ENCODE measurements at regions of chr11 and their contacts with region 1.

Region 1: GRCh38 chr11:43852057-43852636 is 28.5 kb upstream of the ALKBH3 start:
- DNase-seq: no peak
- H3K4me3 ChIP-seq: no peak overlapping the region
- H3K27ac ChIP-seq: no peak overlapping the region
- H3K4me1 ChIP-seq: no peaks in the 10 kb centered on the region
- H3K27me3 ChIP-seq: no peaks in the 10 kb centered on the region
- CTCF ChIP-seq: peak; percentile 45 to 77 (median 69)
- POLR2A ChIP-seq: no peak

Region 2: DNA sequence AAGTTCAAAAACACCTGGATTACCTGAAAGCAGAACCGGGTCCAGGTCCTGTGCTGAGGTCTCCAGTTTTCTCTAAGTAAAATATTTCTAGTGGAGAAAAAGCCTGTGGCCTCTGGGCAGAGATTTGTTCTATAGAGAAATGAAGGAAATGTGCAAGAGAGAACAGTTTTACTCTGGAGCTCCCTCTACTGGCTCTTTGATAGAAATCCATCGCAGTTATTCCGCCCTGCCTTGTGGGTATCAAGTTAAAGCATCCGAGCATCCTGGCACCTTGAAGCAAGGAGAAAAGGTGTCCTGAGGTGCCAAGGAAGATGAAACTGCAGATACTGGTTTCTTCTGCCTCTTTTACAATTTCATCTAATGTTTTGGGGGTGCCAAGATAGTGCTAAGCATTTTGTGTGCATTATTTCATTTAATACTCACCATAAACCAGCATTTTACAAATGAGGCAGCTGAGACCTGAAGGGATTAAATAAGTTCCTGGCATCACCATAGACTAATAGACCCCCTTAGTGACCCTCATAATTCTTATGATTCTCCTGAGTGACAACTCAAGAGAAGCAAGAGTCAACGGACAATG is 284.7 kb before region 1 on chr11:
- intact Hi-C with region 1: loop called (anchors 10 kb)
- DNase-seq: no peak
- H3K4me3 ChIP-seq: no peak overlapping the region
- H3K27ac ChIP-seq: no peak overlapping the region
- H3K4me1 ChIP-seq: no peaks in the 10 kb centered on the region
- H3K27me3 ChIP-seq: peaks cover 0 to 84% (median 3%) of the 10 kb centered on the region in 7 donors
- CTCF ChIP-seq: peak in 9 of 11 experiments; percentile 24 to 71 (median 60)
- POLR2A ChIP-seq: no peak

Region 3: GRCh38 chr11:43784866-43785265 is 67.3 kb before region 1 on chr11:
- intact Hi-C with region 1: no loop called
- DNase-seq: no peak
- H3K4me3 ChIP-seq: no peak overlapping the region
- H3K27ac ChIP-seq: no peak overlapping the region
- H3K4me1 ChIP-seq: peaks cover 0 to 24% (median 11%) of the 10 kb centered on the region in 6 donors
- H3K27me3 ChIP-seq: no peaks in the 10 kb centered on the region
- CTCF ChIP-seq: no peak
- POLR2A ChIP-seq: no peak

Region 4: DNA sequence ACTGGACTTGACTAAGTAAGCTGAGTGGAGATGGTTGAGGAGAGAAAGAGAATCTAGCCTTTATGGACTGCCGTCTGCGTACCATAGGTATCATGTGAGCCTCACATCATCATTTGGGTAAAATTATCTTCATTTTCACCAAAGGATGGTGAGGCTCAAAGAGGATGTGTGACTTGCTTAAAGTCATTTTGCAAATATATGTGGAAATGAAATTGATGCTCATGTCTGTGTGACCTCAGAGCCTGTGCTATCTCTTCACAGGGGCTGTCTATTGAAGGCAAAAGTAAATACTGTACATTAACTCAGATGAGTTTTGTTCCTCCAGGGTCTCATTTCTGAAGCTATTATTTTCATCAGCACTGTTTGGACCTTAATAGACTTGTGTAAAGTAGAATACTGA is 54.8 kb before region 1 on chr11:
- intact Hi-C with region 1: no loop called
- DNase-seq: no peak
- H3K4me3 ChIP-seq: no peak overlapping the region
- H3K27ac ChIP-seq: no peak overlapping the region
- H3K4me1 ChIP-seq: no peaks in the 10 kb centered on the region
- H3K27me3 ChIP-seq: no peaks in the 10 kb centered on the region
- CTCF ChIP-seq: no peak
- POLR2A ChIP-seq: no peak

Region 5: DNA sequence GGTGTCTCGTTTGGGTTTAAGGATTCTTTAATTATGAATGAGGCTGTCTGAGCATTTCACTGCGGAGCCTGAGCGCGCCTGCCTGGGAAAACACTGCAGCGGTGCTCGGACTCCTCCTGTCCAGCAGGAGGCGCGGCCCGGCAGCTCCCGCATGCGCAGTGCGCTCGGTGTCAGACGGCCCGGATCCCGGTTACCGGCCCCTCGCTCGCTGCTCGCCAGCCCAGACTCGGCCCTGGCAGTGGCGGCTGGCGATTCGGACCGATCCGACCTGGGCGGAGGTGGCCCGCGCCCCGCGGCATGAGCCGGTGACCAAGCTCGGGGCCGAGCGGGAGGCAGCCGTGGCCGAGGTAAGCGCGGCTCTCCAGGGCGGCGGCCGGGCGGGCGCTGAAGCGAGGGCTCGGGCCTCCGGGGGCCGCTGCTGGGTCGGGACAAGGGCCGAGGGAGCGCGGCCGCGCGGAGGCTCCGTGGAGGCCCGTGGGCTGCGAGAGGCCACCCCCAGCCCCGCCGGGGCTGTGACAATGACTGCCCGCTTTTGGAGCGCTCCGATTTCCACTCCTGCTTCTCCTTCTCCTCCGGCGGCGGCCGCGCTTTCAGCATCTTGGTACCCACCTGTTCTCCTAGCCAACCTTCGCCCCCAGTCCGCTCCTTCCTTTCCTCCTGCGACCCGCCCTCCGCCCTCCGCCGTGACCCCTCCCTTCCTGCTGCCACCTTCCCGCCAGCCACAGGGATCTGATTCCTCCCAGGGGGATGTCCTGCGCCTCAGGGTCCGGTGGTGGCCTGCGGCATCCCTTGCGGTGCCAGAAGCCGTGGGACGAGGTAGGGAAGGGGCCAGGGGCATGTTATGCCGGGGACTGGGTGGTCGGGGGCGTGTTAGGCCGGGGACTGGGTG is 243.6 kb after region 1 on chr11 and contains the start of gene EXT2:
- intact Hi-C with region 1: no loop called
- DNase-seq: peak; percentile 98
- H3K4me3 ChIP-seq: peak within 1 kb of the TSS; percentile 61 to 97 (median 85)
- H3K27ac ChIP-seq: peak within 1 kb of the TSS; percentile 32 to 88 (median 78)
- H3K4me1 ChIP-seq: peaks cover 6 to 40% (median 28%) of the 10 kb centered on the region in 6 donors
- H3K27me3 ChIP-seq: no peaks in the 10 kb centered on the region
- CTCF ChIP-seq: peak; percentile 66 to 98 (median 91)
- POLR2A ChIP-seq: peak in 1 of 3 donors; percentile 50
- total RNA-seq, gene EXT2: 35.0 to 60.1 (median 45.0) TPM

Region 6: DNA sequence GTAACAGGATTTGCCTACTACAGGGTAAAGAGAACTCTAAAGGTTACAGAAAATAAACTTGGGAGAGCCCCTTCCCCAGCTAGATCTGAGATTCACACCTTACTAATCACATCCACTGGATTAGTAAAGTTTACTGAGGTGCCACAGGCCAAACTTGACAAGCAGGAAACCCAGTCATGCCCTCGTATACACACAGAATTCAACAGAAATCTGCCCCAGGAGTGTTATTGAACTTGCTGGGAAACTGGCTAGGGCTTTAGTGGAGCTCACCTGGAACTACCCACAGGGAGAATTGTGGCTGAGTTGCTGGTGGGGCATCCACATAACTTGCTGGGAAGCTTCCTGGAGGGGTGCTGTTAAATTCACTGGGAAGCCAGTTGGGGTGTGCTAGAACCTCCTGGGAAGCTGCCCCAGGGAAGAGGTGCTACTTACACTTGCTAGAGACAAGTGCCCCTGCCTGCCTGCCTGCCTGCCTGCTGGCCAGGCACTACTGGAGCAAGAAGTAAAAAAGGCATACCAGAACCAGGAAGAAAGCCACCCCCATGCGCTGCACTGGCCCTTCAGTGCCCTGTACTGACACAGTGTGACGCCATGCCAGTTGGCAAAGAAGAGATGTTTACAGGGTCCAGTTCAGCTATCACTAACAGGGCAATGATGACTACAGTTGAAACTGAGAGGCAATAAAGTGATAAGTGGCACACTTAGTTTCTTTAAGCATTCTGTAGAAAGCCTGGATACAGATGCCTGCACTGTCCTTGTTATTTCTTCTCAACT is 351.3 kb after region 1 on chr11:
- intact Hi-C with region 1: no loop called
- DNase-seq: no peak
- H3K4me3 ChIP-seq: no peak overlapping the region
- H3K27ac ChIP-seq: no peak overlapping the region
- H3K4me1 ChIP-seq: no peaks in the 10 kb centered on the region
- H3K27me3 ChIP-seq: no peaks in the 10 kb centered on the region
- CTCF ChIP-seq: no peak
- POLR2A ChIP-seq: no peak

Measured in spleen (tissue), 13 donors.